T-cell (primary cell): ENCODE measurements at regions of chr14 and their contacts with region 1.

Region 1: DNA sequence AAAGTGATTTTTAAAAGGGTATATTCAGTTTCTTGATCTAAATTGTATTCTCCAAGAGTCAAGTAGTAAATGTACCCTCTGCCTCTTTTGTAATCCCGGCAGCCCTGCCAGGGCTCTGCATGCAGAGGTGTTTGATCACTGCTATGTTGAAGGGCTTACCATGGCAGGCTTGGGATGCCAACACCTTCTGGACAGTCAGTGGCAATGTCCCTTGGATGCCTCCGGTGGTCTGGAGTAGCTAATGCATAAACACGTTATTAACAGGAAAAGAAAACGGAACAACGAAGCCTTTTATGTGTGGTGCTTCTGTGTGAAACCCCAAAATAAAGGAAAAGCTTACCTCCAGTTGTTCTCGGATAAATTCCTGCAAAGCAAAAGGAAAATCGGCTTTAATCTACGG is 19.9 kb downstream of the EIF2B2 start:
- DNase-seq: peak in 2 of 35 experiments; percentile 11 to 15
- ATAC-seq: no peak
- H3K4me3 ChIP-seq: no peak overlapping the region
- H3K4me3 Mint-ChIP-seq: no peak overlapping the region
- H3K27ac ChIP-seq: no peak overlapping the region
- H3K27ac Mint-ChIP-seq: no peak overlapping the region
- H3K4me1 ChIP-seq: no peaks in the 10 kb centered on the region
- H3K4me1 Mint-ChIP-seq: no peaks in the 10 kb centered on the region
- H3K27me3 ChIP-seq: no peaks in the 10 kb centered on the region
- H3K27me3 Mint-ChIP-seq: no peaks in the 10 kb centered on the region

Region 2: GRCh38 chr14:74988131-74988530 is 34.5 kb before region 1 on chr14:
- CTCF ChIA-PET with region 1: no interaction called
- POLR2A ChIA-PET with region 1: interaction called in 1 of 2 experiments, 11 read pairs
- DNase-seq: no peak
- ATAC-seq: no peak
- H3K4me3 ChIP-seq: no peak overlapping the region
- H3K4me3 Mint-ChIP-seq: no peak overlapping the region
- H3K27ac ChIP-seq: no peak overlapping the region
- H3K27ac Mint-ChIP-seq: no peak overlapping the region
- H3K4me1 ChIP-seq: no peaks in the 10 kb centered on the region
- H3K4me1 Mint-ChIP-seq: no peaks in the 10 kb centered on the region
- H3K27me3 ChIP-seq: peaks cover 0 to 5% of the 10 kb centered on the region in 2 experiments
- H3K27me3 Mint-ChIP-seq: peaks cover 0 to 2% of the 10 kb centered on the region in 2 donors

Region 3: DNA sequence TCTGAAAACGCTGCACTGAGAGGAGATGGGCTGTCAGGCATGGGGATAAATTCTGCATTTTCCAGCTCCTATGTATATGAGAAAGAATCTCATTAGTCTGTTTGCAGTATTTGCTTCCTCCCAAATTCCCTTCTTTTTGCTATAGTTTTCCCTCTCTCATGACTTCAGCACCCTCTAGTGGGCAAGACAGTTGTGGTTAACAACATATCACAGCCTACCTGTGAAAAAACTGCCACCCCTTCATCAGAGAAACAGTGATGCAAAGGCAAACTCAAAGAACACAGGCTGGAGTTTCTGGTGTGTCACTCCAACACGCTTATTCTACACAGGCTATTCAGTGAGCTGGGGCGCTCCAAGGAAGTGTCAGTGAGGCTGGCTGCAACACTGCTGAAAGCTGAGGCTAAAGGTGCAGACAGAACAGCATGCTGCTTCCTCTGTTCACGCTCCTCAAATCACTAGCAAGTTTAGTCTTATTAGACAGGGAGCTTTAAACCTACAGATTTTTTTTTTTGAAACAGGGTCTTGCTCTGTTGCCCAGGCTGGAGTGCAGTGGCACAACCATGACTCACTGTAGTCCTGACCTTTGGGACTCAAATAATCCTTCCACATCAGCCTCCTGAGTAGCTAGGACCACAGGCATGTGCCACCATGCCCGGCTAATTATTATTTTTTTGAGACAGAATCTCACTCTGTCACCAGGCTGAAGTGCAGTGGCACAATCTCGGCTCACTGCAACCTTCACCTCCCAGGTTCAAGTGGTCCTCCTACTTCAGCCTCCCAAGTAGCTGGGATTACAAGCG is 66.1 kb after region 1 on chr14:
- CTCF ChIA-PET with region 1: no interaction called
- POLR2A ChIA-PET with region 1: interaction called in 1 of 2 experiments, 11 read pairs
- DNase-seq: peak in 27 of 35 experiments; percentile 1 to 71 (median 24)
- ATAC-seq: peak in 3 of 4 experiments; percentile 63 to 68 (median 68)
- H3K4me3 ChIP-seq: no peak overlapping the region
- H3K4me3 Mint-ChIP-seq: no peak overlapping the region
- H3K27ac ChIP-seq: no peak overlapping the region
- H3K27ac Mint-ChIP-seq: no peak overlapping the region
- H3K4me1 ChIP-seq: no peaks in the 10 kb centered on the region
- H3K4me1 Mint-ChIP-seq: no peaks in the 10 kb centered on the region
- H3K27me3 ChIP-seq: no peaks in the 10 kb centered on the region
- H3K27me3 Mint-ChIP-seq: no peaks in the 10 kb centered on the region